Naive thymus-derived CD8-positive, alpha-beta T cell (primary cell): ENCODE measurements at regions of chr20 and their contacts with region 1.

Region 1: DNA sequence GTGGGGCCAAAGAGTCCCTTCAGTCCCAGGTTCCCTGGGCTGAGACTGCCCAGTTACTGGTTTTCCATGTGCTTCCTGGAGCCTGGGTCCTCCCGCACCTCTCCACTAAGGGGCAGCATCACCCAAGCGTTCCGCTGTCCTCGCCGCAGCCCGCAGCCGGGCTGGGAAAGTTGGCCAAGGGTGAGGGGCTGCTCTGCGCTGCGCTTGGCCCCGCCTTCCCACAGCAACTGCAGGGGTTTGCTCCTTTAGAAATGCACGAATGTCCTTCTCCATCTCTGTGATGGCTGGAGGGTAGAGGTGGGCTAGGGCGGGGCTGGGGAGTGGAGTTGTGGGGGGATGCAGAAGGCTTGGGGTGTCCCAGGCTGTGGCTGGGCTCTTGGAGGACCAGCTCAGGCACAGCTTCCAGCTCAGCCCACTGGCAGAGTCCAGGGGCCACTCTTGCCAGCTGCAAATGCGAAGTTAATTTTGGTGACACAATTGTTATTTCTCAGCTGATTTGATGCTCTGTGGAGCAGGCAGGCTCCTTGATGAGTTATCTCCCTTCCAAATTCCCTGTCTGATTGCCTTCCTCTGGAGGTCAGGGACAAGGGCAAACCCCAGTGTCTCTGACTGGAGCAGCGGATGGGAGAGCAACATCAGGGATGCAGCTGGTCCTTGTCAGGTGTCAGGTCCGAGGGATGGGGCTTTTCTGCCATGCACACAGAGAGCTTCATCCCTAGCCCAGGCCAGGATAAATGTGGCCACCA is 63.2 kb downstream of the NOL4L start:
- DNase-seq: peak; percentile 44 to 83 (median 68)
- ATAC-seq: peak; percentile 77 to 81
- H3K4me3 Mint-ChIP-seq: peak overlapping the region in 9 of 10 donors; percentile 33 to 89 (median 54)
- H3K27ac Mint-ChIP-seq: peak overlapping the region; percentile 81 to 96 (median 93)
- H3K4me1 Mint-ChIP-seq: peaks cover 31 to 79% (median 66%) of the 10 kb centered on the region in 4 donors
- H3K27me3 Mint-ChIP-seq: no peaks in the 10 kb centered on the region

Region 2: GRCh38 chr20:32325706-32326503 is 196.0 kb before region 1 on chr20:
- POLR2A ChIA-PET with region 1: no interaction called
- DNase-seq: no peak
- ATAC-seq: no peak
- H3K4me3 Mint-ChIP-seq: no peak overlapping the region
- H3K27ac Mint-ChIP-seq: peak overlapping the region in 3 of 10 donors; percentile 10 to 51 (median 19)
- H3K4me1 Mint-ChIP-seq: no peaks in the 10 kb centered on the region
- H3K27me3 Mint-ChIP-seq: no peaks in the 10 kb centered on the region

Region 3: GRCh38 chr20:32585011-32585518 is 63.1 kb after region 1 on chr20 and contains the start of gene NOL4L:
- POLR2A ChIA-PET with region 1: interaction called, 20 read pairs
- DNase-seq: peak in 7 of 10 donors; percentile 10 to 52 (median 35)
- ATAC-seq: peak; percentile 32 to 39
- H3K4me3 Mint-ChIP-seq: peak within 1 kb of the TSS; percentile 86 to 95 (median 93)
- H3K27ac Mint-ChIP-seq: peak within 1 kb of the TSS; percentile 84 to 95 (median 88)
- H3K4me1 Mint-ChIP-seq: peaks cover 27 to 45% (median 36%) of the 10 kb centered on the region in 4 donors
- H3K27me3 Mint-ChIP-seq: no peaks in the 10 kb centered on the region
- polyA plus RNA-seq, gene NOL4L: 10.0 to 21.5 (median 14.2) TPM

Region 4: GRCh38 chr20:32652739-32653526 is 131.0 kb after region 1 on chr20:
- POLR2A ChIA-PET with region 1: interaction called, 76 read pairs
- DNase-seq: peak; percentile 74 to 92 (median 88)
- ATAC-seq: peak; percentile 98 to 99
- H3K4me3 Mint-ChIP-seq: peak overlapping the region in 9 of 10 donors; percentile 36 to 75 (median 56)
- H3K27ac Mint-ChIP-seq: peak overlapping the region in 3 of 10 donors; percentile 40 to 47 (median 43)
- H3K4me1 Mint-ChIP-seq: peaks cover 9 to 17% (median 15%) of the 10 kb centered on the region in 4 donors
- H3K27me3 Mint-ChIP-seq: no peaks in the 10 kb centered on the region